Transverse colon (tissue), 4 donors: ENCODE measurements at regions of chr6 and their contacts with region 1.

Region 1: GRCh38 chr6:154510143-154510905 is at the start of gene CNKSR3:
- DNase-seq: peak; percentile 81
- H3K4me3 ChIP-seq: peak within 1 kb of the TSS; percentile 51 to 83 (median 77)
- H3K27ac ChIP-seq: peak within 1 kb of the TSS; percentile 91 to 98 (median 96)
- H3K4me1 ChIP-seq: peaks cover 5 to 65% (median 30%) of the 10 kb centered on the region in 4 donors
- H3K27me3 ChIP-seq: no peaks in the 10 kb centered on the region
- CTCF ChIP-seq: peak in 3 of 5 experiments; percentile 9 to 33 (median 14)
- EP300 ChIP-seq: no peak
- POLR2A ChIP-seq: peak; percentile 77
- total RNA-seq, gene CNKSR3: 4.0 to 27.3 (median 16.9) TPM

Region 2: GRCh38 chr6:154370545-154370944 is 139.8 kb before region 1 on chr6:
- in situ Hi-C with region 1: no loop called
- intact Hi-C with region 1: no loop called
- DNase-seq: peak; percentile 14
- H3K4me3 ChIP-seq: no peak overlapping the region
- H3K27ac ChIP-seq: no peak overlapping the region
- H3K4me1 ChIP-seq: peaks cover 0 to 5% (median 0%) of the 10 kb centered on the region in 4 donors
- H3K27me3 ChIP-seq: no peaks in the 10 kb centered on the region
- CTCF ChIP-seq: peak in 3 of 5 experiments; percentile 13 to 34 (median 26)
- EP300 ChIP-seq: no peak
- POLR2A ChIP-seq: no peak

Region 3: GRCh38 chr6:154448448-154449096 is 61.8 kb before region 1 on chr6:
- in situ Hi-C with region 1: no loop called
- intact Hi-C with region 1: loop called (anchors 5 kb)
- DNase-seq: peak; percentile 30
- H3K4me3 ChIP-seq: no peak overlapping the region
- H3K27ac ChIP-seq: peak overlapping the region; percentile 49 to 78 (median 66)
- H3K4me1 ChIP-seq: peaks cover 0 to 32% (median 15%) of the 10 kb centered on the region in 4 donors
- H3K27me3 ChIP-seq: no peaks in the 10 kb centered on the region
- CTCF ChIP-seq: peak in 3 of 5 experiments; percentile 29 to 48 (median 41)
- EP300 ChIP-seq: peak; percentile 23
- POLR2A ChIP-seq: no peak